WTC11 (cell line): ENCODE measurements at regions of chr18 and their contacts with region 1.

Region 1: GRCh38 chr18:58768293-58768974 is 96.2 kb upstream of the ZNF532 start:
- DNase-seq: peak; percentile 90
- ATAC-seq: peak; percentile 92
- H3K4me3 Mint-ChIP-seq: peak overlapping the region; percentile 70
- H3K27ac Mint-ChIP-seq: no peak overlapping the region
- H3K4me1 Mint-ChIP-seq: peaks cover 12% of the 10 kb centered on the region
- H3K27me3 Mint-ChIP-seq: peaks cover 8% of the 10 kb centered on the region
- CTCF ChIP-seq: peak; percentile 75

Region 2: GRCh38 chr18:58484989-58485981 is 283.1 kb before region 1 on chr18:
- CTCF ChIA-PET with region 1: interaction called, 25 read pairs
- POLR2A ChIA-PET with region 1: no interaction called
- DNase-seq: peak; percentile 34
- ATAC-seq: peak; percentile 89
- H3K4me3 Mint-ChIP-seq: peak overlapping the region; percentile 28
- H3K27ac Mint-ChIP-seq: peak overlapping the region; percentile 71
- H3K4me1 Mint-ChIP-seq: peaks cover 28% of the 10 kb centered on the region
- H3K27me3 Mint-ChIP-seq: peaks cover 9% of the 10 kb centered on the region
- CTCF ChIP-seq: no peak

Region 3: DNA sequence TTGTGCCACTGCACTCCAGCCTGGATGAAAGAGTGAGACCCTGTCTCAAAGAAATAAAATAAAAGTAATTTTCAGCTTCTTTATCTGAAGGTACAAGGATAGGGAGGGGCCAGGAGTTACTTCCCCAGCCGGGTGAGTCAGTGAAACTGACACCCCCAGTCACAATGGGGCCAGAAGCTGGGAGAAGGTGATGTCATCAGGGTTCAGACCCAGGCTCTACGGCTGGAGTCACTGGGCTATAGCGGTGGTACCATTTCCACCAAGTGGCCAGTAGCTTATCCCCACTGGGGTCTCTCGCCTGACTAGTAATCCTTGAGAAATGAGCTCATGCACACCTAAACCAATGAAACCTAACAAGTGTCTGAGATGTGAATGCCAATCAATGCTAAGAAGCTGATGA is 247.5 kb before region 1 on chr18:
- CTCF ChIA-PET with region 1: interaction called, 144 read pairs
- POLR2A ChIA-PET with region 1: no interaction called
- DNase-seq: no peak
- ATAC-seq: no peak
- H3K4me3 Mint-ChIP-seq: no peak overlapping the region
- H3K27ac Mint-ChIP-seq: no peak overlapping the region; the same call in 1 of the 2 replicates
- H3K4me1 Mint-ChIP-seq: peaks cover 3% of the 10 kb centered on the region; the same call in 1 of the 2 replicates
- H3K27me3 Mint-ChIP-seq: no peaks in the 10 kb centered on the region
- CTCF ChIP-seq: no peak

Region 4: GRCh38 chr18:58697146-58697545 is 71.3 kb before region 1 on chr18:
- CTCF ChIA-PET with region 1: interaction called, 10 read pairs
- POLR2A ChIA-PET with region 1: no interaction called
- DNase-seq: no peak
- ATAC-seq: no peak
- H3K4me3 Mint-ChIP-seq: no peak overlapping the region
- H3K27ac Mint-ChIP-seq: no peak overlapping the region; the same call in 1 of the 2 replicates
- H3K4me1 Mint-ChIP-seq: peaks cover 16% of the 10 kb centered on the region
- H3K27me3 Mint-ChIP-seq: no peaks in the 10 kb centered on the region
- CTCF ChIP-seq: no peak

Region 5: DNA sequence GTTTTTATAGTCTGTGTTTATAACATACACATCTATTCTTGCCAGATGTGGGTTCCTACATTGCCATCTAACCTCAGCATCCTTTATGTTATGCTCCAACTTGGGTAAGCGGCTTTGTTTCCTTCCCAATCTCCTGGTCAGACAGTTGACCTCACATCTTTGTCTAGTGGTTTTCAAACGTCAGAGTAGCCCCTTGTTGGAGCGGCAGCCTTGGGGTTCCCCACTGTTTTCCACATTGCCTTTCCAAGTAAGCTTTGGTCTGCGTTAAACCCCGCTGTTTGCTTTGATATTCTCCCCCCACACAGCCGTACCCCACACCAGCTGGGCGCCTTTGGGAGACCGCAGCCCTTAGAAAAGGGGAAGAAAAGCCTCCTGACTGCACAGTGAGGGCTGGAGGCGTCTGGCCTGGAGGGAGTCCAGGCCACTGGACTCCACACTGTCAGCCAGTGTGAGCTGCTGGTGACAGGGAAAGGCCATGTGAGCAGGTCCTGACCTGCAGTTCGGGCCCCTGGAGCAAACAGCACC is 13.8 kb before region 1 on chr18:
- CTCF ChIA-PET with region 1: interaction called, 29 read pairs
- POLR2A ChIA-PET with region 1: no interaction called
- DNase-seq: no peak
- ATAC-seq: no peak; the same call in 1 of the 2 replicates
- H3K4me3 Mint-ChIP-seq: no peak overlapping the region
- H3K27ac Mint-ChIP-seq: no peak overlapping the region
- H3K4me1 Mint-ChIP-seq: peaks cover 5% of the 10 kb centered on the region
- H3K27me3 Mint-ChIP-seq: no peaks in the 10 kb centered on the region
- CTCF ChIP-seq: no peak

Region 6: DNA sequence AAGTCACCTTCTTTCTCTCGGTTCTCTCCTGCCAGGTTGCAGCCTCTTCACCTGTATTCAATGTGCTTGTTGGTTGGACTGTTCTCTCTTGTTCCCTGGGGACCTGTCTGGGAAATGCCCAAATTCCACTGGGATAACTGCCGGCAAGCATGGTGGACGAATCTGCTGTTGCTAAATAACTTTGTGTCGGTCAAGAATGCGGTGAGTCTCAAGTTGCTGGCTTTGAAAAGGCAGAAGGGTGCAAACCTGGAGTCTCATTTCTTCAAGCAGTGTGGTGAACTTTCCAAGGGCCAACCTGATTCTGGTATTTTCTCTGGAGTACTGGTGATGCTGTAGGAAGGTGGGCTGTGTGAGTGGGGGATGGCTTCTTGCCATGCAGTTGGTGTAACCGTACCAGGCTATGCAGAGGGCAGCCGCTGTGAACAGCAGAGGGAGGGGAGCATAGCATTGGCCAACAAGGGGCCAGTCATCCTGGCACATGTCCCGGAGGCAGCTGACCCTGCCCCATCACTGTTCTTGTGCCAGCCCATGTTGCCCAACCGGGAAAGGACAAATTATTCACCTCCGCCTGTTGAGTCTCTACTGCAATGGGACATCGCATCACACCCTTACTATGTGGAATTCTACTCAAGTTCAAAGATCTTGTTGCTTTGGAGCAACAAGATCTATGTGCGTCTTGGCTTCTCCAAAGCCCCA is 283.2 kb after region 1 on chr18:
- CTCF ChIA-PET with region 1: interaction called, 91 read pairs
- POLR2A ChIA-PET with region 1: no interaction called
- DNase-seq: no peak
- ATAC-seq: no peak
- H3K4me3 Mint-ChIP-seq: no peak overlapping the region
- H3K27ac Mint-ChIP-seq: no peak overlapping the region
- H3K4me1 Mint-ChIP-seq: peaks cover 42% of the 10 kb centered on the region
- H3K27me3 Mint-ChIP-seq: no peaks in the 10 kb centered on the region; the same call in 1 of the 2 replicates
- CTCF ChIP-seq: no peak

Region 7: GRCh38 chr18:59075923-59076322 is 307.5 kb after region 1 on chr18:
- CTCF ChIA-PET with region 1: interaction called, 221 read pairs
- POLR2A ChIA-PET with region 1: interaction called, 10 read pairs
- DNase-seq: no peak
- ATAC-seq: no peak
- H3K4me3 Mint-ChIP-seq: no peak overlapping the region
- H3K27ac Mint-ChIP-seq: no peak overlapping the region
- H3K4me1 Mint-ChIP-seq: no peaks in the 10 kb centered on the region
- H3K27me3 Mint-ChIP-seq: peaks cover 15% of the 10 kb centered on the region
- CTCF ChIP-seq: no peak